ENCODE measurements at regions of chr1 and their contacts with region 1.

Region 1: DNA sequence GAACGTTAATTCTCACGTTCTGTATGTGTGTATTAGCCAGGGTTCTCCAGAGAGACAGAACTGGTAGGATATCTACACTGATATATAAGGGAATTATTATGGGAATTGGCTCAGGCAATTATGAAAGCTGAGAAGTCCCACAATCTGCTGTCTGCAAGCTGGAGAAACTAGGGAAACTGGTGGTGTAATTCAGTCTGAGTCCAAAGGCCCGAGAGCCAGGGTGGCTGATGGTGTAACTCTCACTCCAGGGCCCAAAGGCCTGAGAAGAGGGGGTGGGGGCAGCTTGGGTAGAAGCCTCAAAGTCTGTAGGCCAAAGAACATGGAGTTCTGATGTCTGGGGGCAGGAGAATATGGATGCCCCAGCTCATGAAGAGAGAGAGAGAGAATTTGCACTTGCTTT is 13.3 kb upstream of the VASH2 start:
- DNase-seq: no peak
- CTCF ChIP-seq: no peak

Region 2: GRCh38 chr1:212950243-212951125 is 13.4 kb after region 1 on chr1 and contains the start of gene VASH2:
- CTCF ChIA-PET with region 1: interaction called, 11 read pairs
- POLR2A ChIA-PET with region 1: interaction called, 3 read pairs
- DNase-seq: peak; percentile 95
- CTCF ChIP-seq: no peak

Measured in GM10248 (cell line).